BJ (cell line): ENCODE measurements at regions of chr3 and their contacts with region 1.

Region 1: DNA sequence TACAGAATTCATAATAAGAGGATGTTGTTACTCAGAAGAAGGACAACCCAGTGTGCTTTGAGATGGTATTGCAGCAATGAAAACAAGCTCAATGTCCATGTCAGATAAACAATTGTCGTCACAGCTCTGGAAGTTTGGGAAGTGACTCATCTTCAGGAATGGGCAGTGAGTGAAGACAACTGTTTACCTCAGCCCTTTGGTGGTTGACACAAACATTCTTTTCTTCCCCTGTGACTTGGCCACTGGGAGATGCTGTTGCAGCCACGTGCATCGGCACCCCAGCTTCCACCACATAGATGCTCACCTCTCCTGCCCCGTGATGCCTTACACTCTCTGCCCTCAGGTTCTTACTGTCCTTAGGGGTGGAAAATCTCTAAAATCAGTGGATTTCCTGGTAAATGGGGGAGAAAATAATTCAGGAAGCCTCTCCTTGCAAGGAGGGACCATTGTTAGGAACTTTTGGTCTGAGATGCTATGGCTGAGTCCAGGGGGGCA is 114.1 kb upstream of the GALNT15 start:
- DNase-seq: peak; percentile 99
- H3K4me3 ChIP-seq: no peak overlapping the region
- H3K27me3 ChIP-seq: no peaks in the 10 kb centered on the region
- CTCF ChIP-seq: peak; percentile 34

Region 2: DNA sequence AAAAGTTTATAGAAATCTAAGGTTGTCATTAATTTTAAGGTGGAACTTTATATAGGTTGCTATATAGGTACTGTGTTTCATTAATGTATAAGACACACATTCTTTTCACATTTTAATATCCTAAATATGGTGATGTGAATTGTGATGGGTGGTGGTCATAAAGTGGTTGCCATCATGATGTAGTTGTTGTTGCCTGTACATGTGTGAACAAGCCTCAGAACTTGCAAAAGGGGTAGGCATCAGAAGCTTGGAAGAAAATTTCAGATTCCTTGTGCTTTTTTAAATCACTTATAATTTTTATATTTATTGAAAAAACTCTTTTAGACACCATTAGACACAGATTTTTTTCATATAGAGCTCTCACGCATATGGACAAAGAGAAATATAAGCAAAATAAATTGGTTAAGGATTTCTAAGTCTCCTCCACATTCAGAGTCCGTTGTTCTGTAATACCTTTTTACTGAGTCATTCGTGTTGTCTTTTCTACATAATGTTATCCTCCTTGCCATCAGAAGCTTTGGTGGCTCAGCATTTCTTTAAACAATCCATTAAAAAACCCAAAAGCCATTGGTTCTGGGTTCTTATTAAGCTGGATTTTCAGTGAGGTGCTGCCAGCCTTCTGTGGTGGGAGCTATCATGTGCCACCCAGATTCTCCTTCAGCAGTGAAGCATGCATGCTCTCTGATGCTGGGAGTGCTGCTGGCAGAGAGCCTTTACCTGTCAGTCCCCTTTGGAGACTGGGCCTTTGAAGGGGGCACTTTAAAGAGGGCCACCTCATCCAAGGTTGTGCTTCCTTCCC is 26.3 kb before region 1 on chr3:
- CTCF ChIA-PET with region 1: no interaction called
- POLR2A ChIA-PET with region 1: no interaction called
- DNase-seq: no peak
- H3K4me3 ChIP-seq: no peak overlapping the region
- H3K27me3 ChIP-seq: no peaks in the 10 kb centered on the region
- CTCF ChIP-seq: no peak

Region 3: GRCh38 chr3:16072420-16073110 is 12.2 kb after region 1 on chr3:
- CTCF ChIA-PET with region 1: interaction called, 12 read pairs
- POLR2A ChIA-PET with region 1: interaction called, 3 read pairs
- DNase-seq: no peak
- H3K4me3 ChIP-seq: no peak overlapping the region
- H3K27me3 ChIP-seq: no peaks in the 10 kb centered on the region
- CTCF ChIP-seq: no peak

Region 4: GRCh38 chr3:16142350-16143025 is 82.1 kb after region 1 on chr3:
- CTCF ChIA-PET with region 1: no interaction called
- POLR2A ChIA-PET with region 1: no interaction called
- DNase-seq: no peak
- H3K4me3 ChIP-seq: no peak overlapping the region
- H3K27me3 ChIP-seq: no peaks in the 10 kb centered on the region
- CTCF ChIP-seq: no peak